IMR-90 (cell line): ENCODE measurements at regions of chr20 and their contacts with region 1.

Region 1: DNA sequence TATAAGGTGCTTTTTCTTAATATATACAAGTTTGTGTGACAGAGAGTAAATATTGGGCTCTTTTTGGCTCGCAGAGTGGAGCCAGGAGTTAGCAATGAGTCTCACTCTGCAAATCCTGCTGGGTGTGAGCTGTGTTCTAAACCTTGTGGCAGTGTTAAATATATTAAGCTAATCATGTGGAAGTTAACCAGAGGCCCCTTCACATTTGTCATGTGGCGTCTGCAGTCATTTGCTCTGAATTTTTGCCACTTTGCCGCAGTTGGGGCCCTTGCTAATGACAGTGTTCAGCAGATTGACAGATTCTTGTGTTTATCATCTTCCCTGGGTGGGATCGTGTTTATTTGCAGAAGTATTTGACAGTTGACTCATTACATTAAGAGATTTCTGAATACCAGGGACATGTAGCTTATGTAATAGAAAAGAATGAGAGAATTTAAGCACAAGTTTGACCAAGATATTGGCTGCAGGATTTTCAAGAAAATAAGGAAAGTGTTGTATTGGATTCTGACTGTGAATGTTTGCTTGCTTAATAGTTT is 37.9 kb downstream of the SPATA2 start:
- DNase-seq: no peak
- ATAC-seq: peak; percentile 43
- H3K4me3 ChIP-seq: no peak overlapping the region
- H3K27ac ChIP-seq: no peak overlapping the region
- H3K4me1 ChIP-seq: peaks cover 7% of the 10 kb centered on the region
- H3K27me3 ChIP-seq: no peaks in the 10 kb centered on the region
- CTCF ChIP-seq: no peak
- POLR2A ChIP-seq: no peak
- RAD21 ChIP-seq: no peak

Region 2: GRCh38 chr20:49901588-49901987 is 24.1 kb after region 1 on chr20:
- CTCF ChIA-PET with region 1: no interaction called
- POLR2A ChIA-PET with region 1: interaction called, 11 read pairs
- dilution Hi-C with region 1: no loop called
- in situ Hi-C with region 1: no loop called
- intact Hi-C with region 1: no loop called
- DNase-seq: no peak
- ATAC-seq: no peak
- H3K4me3 ChIP-seq: no peak overlapping the region
- H3K27ac ChIP-seq: no peak overlapping the region
- H3K4me1 ChIP-seq: peaks cover 6% of the 10 kb centered on the region
- H3K27me3 ChIP-seq: no peaks in the 10 kb centered on the region
- CTCF ChIP-seq: no peak
- POLR2A ChIP-seq: no peak
- RAD21 ChIP-seq: no peak

Region 3: DNA sequence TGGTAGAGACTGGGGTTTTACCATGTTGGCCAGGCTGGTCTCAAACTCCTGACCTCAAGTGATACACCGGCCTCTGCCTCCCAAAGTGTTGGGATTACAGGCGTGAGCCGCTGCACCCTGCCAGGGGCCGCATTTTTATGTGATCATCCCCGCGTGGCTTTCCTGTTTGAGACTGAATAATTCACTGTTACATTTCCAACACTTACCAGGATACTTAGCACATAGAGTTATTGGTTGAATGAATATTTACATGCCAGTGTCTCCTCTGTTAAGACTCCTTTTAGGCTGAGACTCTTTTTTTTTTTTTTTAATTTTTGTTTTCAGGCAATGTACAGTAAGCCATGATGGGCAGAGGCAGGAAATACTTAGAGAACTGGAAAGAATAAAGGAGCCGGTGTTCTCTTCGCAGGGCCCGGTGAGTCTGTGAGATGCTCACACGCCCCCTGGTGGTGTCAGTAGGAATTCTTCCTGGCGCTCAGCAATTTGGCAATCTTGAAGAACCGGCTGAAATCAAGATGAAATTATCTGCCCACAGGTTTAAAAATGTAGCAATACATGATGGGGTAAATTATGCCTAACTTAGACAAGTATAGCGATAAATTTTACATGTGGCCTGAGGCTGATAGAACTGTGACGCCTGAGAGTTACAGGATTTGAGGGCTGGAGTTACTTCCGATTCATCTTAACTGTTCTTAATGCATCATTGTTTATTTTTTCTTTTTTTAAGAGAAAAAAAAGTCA is 51.1 kb after region 1 on chr20:
- CTCF ChIA-PET with region 1: interaction called, 10 read pairs
- POLR2A ChIA-PET with region 1: no interaction called
- dilution Hi-C with region 1: no loop called
- in situ Hi-C with region 1: no loop called
- intact Hi-C with region 1: no loop called
- DNase-seq: peak; percentile 89
- ATAC-seq: peak; percentile 98
- H3K4me3 ChIP-seq: peak overlapping the region; percentile 16; the same call in 1 of the 2 replicates
- H3K27ac ChIP-seq: 0 out of 2 replicates have a peak overlapping the region, but pooled peaks have one; percentile 4
- H3K4me1 ChIP-seq: no peaks in the 10 kb centered on the region
- H3K27me3 ChIP-seq: no peaks in the 10 kb centered on the region
- CTCF ChIP-seq: peak; percentile 93
- POLR2A ChIP-seq: no peak
- RAD21 ChIP-seq: peak; percentile 72

Region 4: GRCh38 chr20:50085452-50086365 is 208.3 kb after region 1 on chr20:
- CTCF ChIA-PET with region 1: no interaction called
- POLR2A ChIA-PET with region 1: no interaction called
- dilution Hi-C with region 1: no loop called
- in situ Hi-C with region 1: no loop called
- intact Hi-C with region 1: no loop called
- DNase-seq: peak; percentile 73
- ATAC-seq: peak; percentile 89
- H3K4me3 ChIP-seq: no peak overlapping the region
- H3K27ac ChIP-seq: peak overlapping the region; percentile 8; the same call in 1 of the 2 replicates
- H3K4me1 ChIP-seq: peaks cover 17% of the 10 kb centered on the region
- H3K27me3 ChIP-seq: no peaks in the 10 kb centered on the region
- CTCF ChIP-seq: peak; percentile 84
- POLR2A ChIP-seq: no peak
- RAD21 ChIP-seq: peak; percentile 78